ENCODE measurements at regions of chr3 and their contacts with region 1.

Region 1: GRCh38 chr3:30042274-30042859 is 564.0 kb upstream of the TGFBR2 start:
- DNase-seq: peak; percentile 93
- H3K4me3 ChIP-seq: no peak overlapping the region
- H3K27ac ChIP-seq: peak overlapping the region; percentile 81
- H3K4me1 ChIP-seq: peaks cover 70% of the 10 kb centered on the region
- H3K27me3 ChIP-seq: no peaks in the 10 kb centered on the region
- CTCF ChIP-seq: peak; percentile 86

Region 2: DNA sequence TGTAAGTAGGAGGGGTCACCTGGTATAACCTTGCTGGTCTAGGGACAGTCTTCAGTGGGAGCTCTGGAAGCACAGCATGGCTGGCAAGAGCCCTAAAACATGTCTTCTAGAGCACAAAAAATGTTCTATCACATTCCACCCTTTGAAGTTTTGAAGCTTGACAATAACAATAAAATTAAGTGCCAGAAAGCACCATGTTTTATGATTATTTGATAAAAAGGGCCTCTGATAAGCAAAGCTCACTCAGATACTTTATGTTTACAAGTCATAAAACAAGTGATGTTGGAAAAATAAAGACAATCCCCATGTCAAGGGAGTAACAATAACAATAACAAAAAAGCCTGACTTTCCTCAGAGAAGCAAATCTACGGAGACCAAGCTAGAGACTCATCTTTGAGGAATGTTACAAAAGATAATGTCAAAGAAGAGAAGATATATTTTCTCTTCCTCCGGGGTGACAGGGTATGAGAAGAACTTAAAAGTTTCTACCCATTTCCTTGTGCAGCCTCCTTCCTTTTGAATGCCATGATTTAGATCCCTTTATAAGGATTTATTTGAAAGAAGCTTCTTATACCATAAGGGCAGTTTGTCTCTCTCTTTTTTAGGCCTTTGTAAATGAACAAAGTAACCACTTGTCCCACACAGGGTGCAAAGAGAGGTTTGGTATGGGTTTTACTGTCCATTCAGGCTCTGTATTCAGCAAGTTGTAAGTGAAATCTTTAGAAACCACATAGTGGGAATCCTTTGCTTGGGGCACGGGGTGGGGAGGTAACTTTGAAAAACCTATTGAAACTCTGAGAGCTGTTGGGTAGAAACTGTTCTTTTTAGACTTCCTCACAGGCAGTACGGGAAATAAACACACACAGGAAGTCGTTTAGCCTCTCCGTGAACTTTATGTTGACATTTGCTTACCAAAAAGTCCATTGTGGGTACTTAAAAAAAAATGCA is 871.0 kb before region 1 on chr3:
- CTCF ChIA-PET with region 1: no interaction called
- POLR2A ChIA-PET with region 1: no interaction called
- intact Hi-C with region 1: no loop called
- DNase-seq: no peak
- H3K4me3 ChIP-seq: no peak overlapping the region
- H3K27ac ChIP-seq: no peak overlapping the region
- H3K4me1 ChIP-seq: peaks cover 1% of the 10 kb centered on the region
- H3K27me3 ChIP-seq: no peaks in the 10 kb centered on the region
- CTCF ChIP-seq: no peak

Region 3: DNA sequence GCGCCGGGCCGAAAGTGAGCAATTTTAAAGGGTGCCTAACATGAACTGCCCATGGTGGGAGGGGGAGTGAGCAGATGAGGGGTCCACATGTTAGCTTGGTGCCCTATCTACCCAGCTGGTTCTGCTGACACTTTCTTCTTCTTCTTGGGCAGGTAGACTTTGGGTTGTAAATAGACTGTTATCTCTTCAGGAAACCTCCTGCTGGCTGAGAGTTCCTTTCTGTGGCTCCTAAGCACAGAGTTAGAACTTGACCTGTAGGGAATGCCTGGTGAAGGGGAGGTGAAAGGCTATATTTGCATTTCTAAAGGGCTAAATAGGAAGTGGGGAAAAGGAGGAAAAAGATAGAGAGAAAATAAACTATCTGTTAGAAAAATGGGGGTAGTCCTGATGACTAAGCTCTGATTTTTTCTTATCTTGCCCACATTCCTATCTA is 42.6 kb after region 1 on chr3:
- CTCF ChIA-PET with region 1: no interaction called
- POLR2A ChIA-PET with region 1: no interaction called
- intact Hi-C with region 1: no loop called
- DNase-seq: no peak
- H3K4me3 ChIP-seq: no peak overlapping the region
- H3K27ac ChIP-seq: no peak overlapping the region
- H3K4me1 ChIP-seq: peaks cover 9% of the 10 kb centered on the region
- H3K27me3 ChIP-seq: no peaks in the 10 kb centered on the region
- CTCF ChIP-seq: no peak

Region 4: GRCh38 chr3:30112902-30113484 is 70.6 kb after region 1 on chr3:
- CTCF ChIA-PET with region 1: no interaction called
- POLR2A ChIA-PET with region 1: no interaction called
- intact Hi-C with region 1: loop called (anchors 2 kb)
- DNase-seq: peak; percentile 79
- H3K4me3 ChIP-seq: no peak overlapping the region
- H3K27ac ChIP-seq: no peak overlapping the region
- H3K4me1 ChIP-seq: peaks cover 29% of the 10 kb centered on the region
- H3K27me3 ChIP-seq: no peaks in the 10 kb centered on the region
- CTCF ChIP-seq: peak; percentile 76

Region 5: GRCh38 chr3:30199096-30199759 is 156.9 kb after region 1 on chr3:
- CTCF ChIA-PET with region 1: interaction called, 33 read pairs
- POLR2A ChIA-PET with region 1: no interaction called
- intact Hi-C with region 1: loop called (anchors 1 kb)
- DNase-seq: peak; percentile 80
- H3K4me3 ChIP-seq: no peak overlapping the region
- H3K27ac ChIP-seq: no peak overlapping the region
- H3K4me1 ChIP-seq: peaks cover 13% of the 10 kb centered on the region
- H3K27me3 ChIP-seq: no peaks in the 10 kb centered on the region
- CTCF ChIP-seq: peak; percentile 85

Region 6: GRCh38 chr3:30245797-30246622 is 203.6 kb after region 1 on chr3:
- CTCF ChIA-PET with region 1: no interaction called
- POLR2A ChIA-PET with region 1: no interaction called
- intact Hi-C with region 1: no loop called
- DNase-seq: peak; percentile 48
- H3K4me3 ChIP-seq: no peak overlapping the region
- H3K27ac ChIP-seq: no peak overlapping the region
- H3K4me1 ChIP-seq: peaks cover 11% of the 10 kb centered on the region
- H3K27me3 ChIP-seq: no peaks in the 10 kb centered on the region
- CTCF ChIP-seq: no peak

Region 7: GRCh38 chr3:30553641-30554316 is 511.4 kb after region 1 on chr3:
- CTCF ChIA-PET with region 1: no interaction called
- POLR2A ChIA-PET with region 1: no interaction called
- intact Hi-C with region 1: loop called (anchors 10 kb)
- DNase-seq: no peak
- H3K4me3 ChIP-seq: no peak overlapping the region
- H3K27ac ChIP-seq: no peak overlapping the region
- H3K4me1 ChIP-seq: peaks cover 7% of the 10 kb centered on the region
- H3K27me3 ChIP-seq: no peaks in the 10 kb centered on the region
- CTCF ChIP-seq: no peak

Region 8: DNA sequence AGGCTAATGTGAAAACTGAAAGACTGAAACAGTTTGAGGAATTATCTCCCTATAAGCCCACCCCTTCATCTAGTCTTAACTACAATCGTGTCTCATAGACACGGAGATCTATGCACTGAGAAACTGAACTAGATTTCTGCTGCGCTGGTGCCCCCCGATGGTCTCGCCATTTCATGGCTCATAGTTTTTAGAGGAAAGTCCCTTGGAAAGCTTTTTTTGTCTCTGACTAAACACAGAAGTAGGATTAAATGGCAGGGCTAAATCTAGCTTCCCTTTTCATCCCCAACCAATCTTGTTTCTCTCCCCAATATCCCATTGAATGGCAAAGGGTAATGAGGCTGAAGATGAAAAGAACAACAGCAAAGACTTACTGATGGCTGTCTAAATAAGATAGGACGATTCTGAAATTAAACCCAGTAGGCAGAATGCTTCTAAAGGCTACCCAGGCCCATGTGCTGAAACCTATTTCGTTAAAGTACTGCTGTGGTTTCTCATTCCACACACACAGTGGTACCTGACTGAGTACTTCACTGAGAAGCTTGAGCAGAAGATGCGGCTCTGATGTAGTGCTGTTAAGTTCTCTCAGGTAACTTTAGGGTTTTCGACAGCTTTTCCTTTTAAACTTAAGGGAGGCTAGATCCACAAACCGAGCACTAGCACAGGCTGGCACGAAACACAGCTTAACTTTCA is 709.4 kb after region 1 on chr3:
- CTCF ChIA-PET with region 1: interaction called, 4 read pairs
- POLR2A ChIA-PET with region 1: no interaction called
- intact Hi-C with region 1: loop called (anchors 2 kb)
- DNase-seq: peak; percentile 87
- H3K4me3 ChIP-seq: no peak overlapping the region
- H3K27ac ChIP-seq: peak overlapping the region; percentile 59
- H3K4me1 ChIP-seq: peaks cover 81% of the 10 kb centered on the region
- H3K27me3 ChIP-seq: no peaks in the 10 kb centered on the region
- CTCF ChIP-seq: peak; percentile 80

Region 9: DNA sequence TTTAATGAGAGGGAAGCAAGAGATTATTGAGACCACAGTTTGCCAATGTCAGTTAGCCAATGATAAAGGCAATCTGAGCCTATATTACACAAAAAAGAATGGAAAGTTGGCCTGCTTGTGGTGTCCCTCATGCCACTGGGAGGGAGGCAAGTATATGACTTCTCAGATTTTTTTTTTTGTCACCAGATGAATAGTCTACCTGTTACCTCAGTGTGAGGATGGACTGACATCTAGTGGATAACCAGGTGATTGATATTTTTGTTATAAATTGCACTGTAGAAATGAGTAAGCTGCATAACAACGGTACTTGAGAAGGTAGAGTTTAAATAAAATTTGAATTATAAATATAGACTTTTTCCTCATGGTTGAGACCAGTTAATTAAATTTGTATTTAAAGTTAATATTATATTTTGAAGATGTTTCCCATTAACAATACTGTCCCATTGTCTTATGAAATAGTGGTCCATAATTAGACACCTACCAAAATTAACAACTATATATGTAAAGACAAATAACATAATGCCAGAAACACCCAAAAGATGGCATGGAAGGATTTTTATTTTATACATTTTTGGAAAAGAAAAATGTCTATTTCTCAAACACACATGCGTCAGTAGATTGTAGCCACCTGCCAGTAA is 1089.9 kb after region 1 on chr3:
- CTCF ChIA-PET with region 1: no interaction called
- POLR2A ChIA-PET with region 1: no interaction called
- intact Hi-C with region 1: loop called (anchors 2 kb)
- DNase-seq: peak; percentile 62
- H3K4me3 ChIP-seq: no peak overlapping the region
- H3K27ac ChIP-seq: no peak overlapping the region
- H3K4me1 ChIP-seq: no peaks in the 10 kb centered on the region
- H3K27me3 ChIP-seq: no peaks in the 10 kb centered on the region
- CTCF ChIP-seq: peak; percentile 63

Measured in A673 (cell line).